OCI-LY7 (cell line): ENCODE measurements at regions of chr21 and their contacts with region 1.

Region 1: GRCh38 chr21:36989699-36990507 is 16.6 kb upstream of the RIPPLY3 start:
- DNase-seq: peak; percentile 84
- H3K4me3 ChIP-seq: peak overlapping the region; percentile 70
- H3K27ac ChIP-seq: no peak overlapping the region
- H3K4me1 ChIP-seq: peaks cover 12% of the 10 kb centered on the region
- CTCF ChIP-seq: peak; percentile 78

Region 2: GRCh38 chr21:36478941-36479340 is 511.0 kb before region 1 on chr21:
- CTCF ChIA-PET with region 1: no interaction called
- POLR2A ChIA-PET with region 1: no interaction called
- intact Hi-C with region 1: no loop called
- DNase-seq: no peak
- H3K4me3 ChIP-seq: no peak overlapping the region
- H3K27ac ChIP-seq: no peak overlapping the region
- H3K4me1 ChIP-seq: no peaks in the 10 kb centered on the region
- CTCF ChIP-seq: peak; percentile 57; the same call in 1 of the 2 replicates

Region 3: DNA sequence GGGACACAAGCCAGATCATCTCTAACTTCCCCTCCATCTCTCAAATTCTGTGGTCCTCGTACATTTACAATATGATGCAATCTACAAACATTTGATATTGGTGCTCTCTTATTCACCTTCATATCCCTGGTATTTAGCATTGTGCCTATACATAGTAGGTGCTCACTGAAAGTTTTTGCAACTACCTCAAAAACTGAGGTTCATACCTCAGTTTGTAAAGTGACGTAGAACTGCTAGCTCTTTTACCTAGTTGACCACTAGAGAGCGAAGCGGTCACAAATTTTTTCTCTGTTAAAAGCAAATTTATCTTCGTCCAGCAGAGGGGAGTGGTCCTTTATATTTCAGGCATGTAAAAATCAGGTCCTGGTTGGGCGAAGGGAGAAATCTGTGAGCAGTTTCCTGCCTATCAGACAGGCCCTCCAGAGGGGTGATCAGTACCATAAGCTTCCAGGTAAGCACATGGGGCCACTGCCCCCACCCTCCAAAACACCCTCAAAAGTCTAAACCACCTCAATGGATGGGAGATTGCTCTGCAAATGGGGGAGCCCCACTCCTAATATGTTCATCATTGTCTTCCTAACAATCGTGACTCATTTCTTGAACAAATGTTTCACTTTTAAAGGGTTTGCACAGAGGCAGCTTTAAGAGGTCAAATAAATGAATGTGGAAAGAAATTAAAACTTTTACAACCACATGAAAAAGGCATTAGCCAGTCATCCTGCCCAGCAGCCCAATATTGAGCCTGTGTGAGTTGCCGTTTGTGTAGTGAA is 12.8 kb before region 1 on chr21:
- CTCF ChIA-PET with region 1: interaction called, 6 read pairs
- POLR2A ChIA-PET with region 1: interaction called, 5 read pairs
- intact Hi-C with region 1: loop called (anchors 1 kb)
- DNase-seq: peak; percentile 87
- H3K4me3 ChIP-seq: peak overlapping the region; percentile 10
- H3K27ac ChIP-seq: no peak overlapping the region
- H3K4me1 ChIP-seq: peaks cover 8% of the 10 kb centered on the region
- CTCF ChIP-seq: peak; percentile 97

Region 4: GRCh38 chr21:37045149-37045548 is 55.2 kb after region 1 on chr21:
- CTCF ChIA-PET with region 1: no interaction called
- POLR2A ChIA-PET with region 1: no interaction called
- intact Hi-C with region 1: no loop called
- DNase-seq: peak; percentile 49
- H3K4me3 ChIP-seq: no peak overlapping the region
- H3K27ac ChIP-seq: no peak overlapping the region
- H3K4me1 ChIP-seq: peaks cover 12% of the 10 kb centered on the region
- CTCF ChIP-seq: no peak

Region 5: DNA sequence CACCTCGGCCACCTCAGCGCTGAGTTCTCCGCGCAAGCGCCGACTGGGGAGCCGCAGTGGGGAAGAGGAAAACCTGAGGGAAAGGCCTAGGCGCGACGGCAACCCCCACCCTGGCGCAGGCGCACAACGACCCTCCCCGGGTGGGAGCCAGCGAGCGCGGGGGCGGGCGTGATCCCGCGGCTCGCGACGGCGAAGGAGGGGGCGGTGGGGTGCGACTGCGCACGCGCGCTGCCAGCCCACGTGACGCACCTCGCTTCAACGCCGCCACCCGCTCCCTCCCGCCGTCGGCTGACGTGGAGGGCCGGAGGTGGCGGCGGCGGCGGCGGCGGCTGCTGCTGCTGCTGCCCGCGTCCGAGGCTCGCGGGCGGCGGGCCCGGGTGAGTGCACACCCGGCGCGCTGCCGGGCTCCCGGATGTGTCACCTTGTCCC is 83.1 kb after region 1 on chr21 and contains the starts of genes PIGP and TTC3:
- CTCF ChIA-PET with region 1: no interaction called
- POLR2A ChIA-PET with region 1: no interaction called
- intact Hi-C with region 1: loop called (anchors 5 kb)
- DNase-seq: peak; percentile 93
- H3K4me3 ChIP-seq: peak within 1 kb of the TSS; percentile 80
- H3K27ac ChIP-seq: peak within 1 kb of the TSS; percentile 55
- H3K4me1 ChIP-seq: peaks cover 32% of the 10 kb centered on the region
- CTCF ChIP-seq: no peak
- total RNA-seq, gene PIGP: 3.7 and 7.4 TPM in 2 replicates
- total RNA-seq, gene TTC3: 73.5 and 92.1 TPM in 2 replicates